Dendritic cell treated with granulocyte-macrophage colony-stimulating factor and Interleukin-4, amounts not matched to agents 40 ng/mL and 50 ng/mL, for 4 days (primary cell): ENCODE measurements at regions of chr7 and their contacts with region 1.

Region 1: GRCh38 chr7:4744391-4745264 is 30.8 kb upstream of the AP5Z1 start:
- H3K4me3 Mint-ChIP-seq: peak overlapping the region; percentile 75
- H3K27ac Mint-ChIP-seq: peak overlapping the region; percentile 95
- H3K4me1 Mint-ChIP-seq: peaks cover 63% of the 10 kb centered on the region
- H3K27me3 Mint-ChIP-seq: no peaks in the 10 kb centered on the region

Region 2: GRCh38 chr7:3867863-3868262 is 876.8 kb before region 1 on chr7:
- intact Hi-C with region 1: no loop called
- H3K4me3 Mint-ChIP-seq: no peak overlapping the region
- H3K27ac Mint-ChIP-seq: no peak overlapping the region
- H3K4me1 Mint-ChIP-seq: no peaks in the 10 kb centered on the region
- H3K27me3 Mint-ChIP-seq: no peaks in the 10 kb centered on the region

Region 3: GRCh38 chr7:4641667-4642467 is 102.8 kb before region 1 on chr7:
- intact Hi-C with region 1: loop called (anchors 5 kb)
- H3K4me3 Mint-ChIP-seq: peak overlapping the region; percentile 91
- H3K27ac Mint-ChIP-seq: peak overlapping the region; percentile 91
- H3K4me1 Mint-ChIP-seq: peaks cover 6% of the 10 kb centered on the region
- H3K27me3 Mint-ChIP-seq: peaks cover 1% of the 10 kb centered on the region

Region 4: GRCh38 chr7:4712281-4713182 is 32.1 kb before region 1 on chr7:
- intact Hi-C with region 1: loop called (anchors 5 kb)
- H3K4me3 Mint-ChIP-seq: no peak overlapping the region
- H3K27ac Mint-ChIP-seq: peak overlapping the region; percentile 72
- H3K4me1 Mint-ChIP-seq: peaks cover 91% of the 10 kb centered on the region
- H3K27me3 Mint-ChIP-seq: no peaks in the 10 kb centered on the region

Region 5: GRCh38 chr7:4725014-4725849 is 19.4 kb before region 1 on chr7:
- intact Hi-C with region 1: loop called (anchors 2 kb)
- H3K4me3 Mint-ChIP-seq: peak overlapping the region; percentile 79
- H3K27ac Mint-ChIP-seq: peak overlapping the region; percentile 94
- H3K4me1 Mint-ChIP-seq: peaks cover 74% of the 10 kb centered on the region
- H3K27me3 Mint-ChIP-seq: no peaks in the 10 kb centered on the region

Region 6: GRCh38 chr7:4775250-4775847 is 30.7 kb after region 1 on chr7 and contains the start of gene AP5Z1:
- intact Hi-C with region 1: loop called (anchors 2 kb)
- H3K4me3 Mint-ChIP-seq: peak within 1 kb of the TSS; percentile 100
- H3K27ac Mint-ChIP-seq: peak within 1 kb of the TSS; percentile 100
- H3K4me1 Mint-ChIP-seq: peaks cover 35% of the 10 kb centered on the region
- H3K27me3 Mint-ChIP-seq: no peaks in the 10 kb centered on the region